BJ (cell line): ENCODE measurements at regions of chr4 and their contacts with region 1.

Region 1: DNA sequence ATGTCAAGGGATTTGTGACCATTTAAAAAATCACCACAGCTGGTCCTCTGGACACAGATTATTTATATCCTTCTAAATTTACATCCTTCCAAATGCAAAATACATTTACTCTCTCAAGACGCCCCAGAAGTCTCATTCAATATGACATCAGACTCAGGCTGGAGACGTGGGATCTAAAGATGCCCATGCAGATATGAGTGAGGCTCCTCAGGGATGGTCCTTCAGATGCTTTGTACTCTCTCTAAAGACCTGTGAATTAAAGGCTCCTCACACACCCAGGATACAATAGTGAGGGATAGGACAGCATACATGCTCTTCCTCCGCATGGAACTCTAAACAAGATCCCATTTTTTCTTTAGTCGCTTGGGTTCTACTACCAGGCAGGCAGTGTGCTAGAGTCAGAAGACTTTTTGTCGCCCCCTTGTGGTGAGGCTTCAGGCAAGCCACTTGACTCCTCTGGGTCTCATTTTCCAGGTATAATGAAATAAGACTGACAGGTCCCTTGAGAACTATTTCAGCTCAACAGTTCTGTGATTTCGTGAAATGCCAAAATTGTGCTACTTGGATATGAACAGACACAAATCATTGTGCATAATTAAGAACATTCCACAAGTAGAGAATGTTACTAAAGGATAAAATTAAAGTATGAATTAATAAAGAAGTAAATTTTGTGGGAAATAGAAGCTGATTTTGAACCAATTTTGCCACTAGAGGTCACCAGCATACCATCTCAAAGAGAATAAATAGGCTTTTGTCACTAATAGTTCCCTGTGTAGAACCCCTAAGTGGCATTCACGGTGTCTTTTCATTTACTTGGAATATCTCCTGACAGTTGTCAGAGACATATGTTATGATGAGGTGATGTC is 13.7 kb upstream of the SCOC start:
- DNase-seq: no peak
- H3K4me3 ChIP-seq: no peak overlapping the region
- H3K27me3 ChIP-seq: 0 out of 2 replicates have a peak, but pooled peaks cover 1% of the 10 kb centered on the region
- CTCF ChIP-seq: peak; percentile 83

Region 2: GRCh38 chr4:139522457-139522856 is 837.3 kb before region 1 on chr4:
- CTCF ChIA-PET with region 1: no interaction called
- POLR2A ChIA-PET with region 1: interaction called, 10 read pairs
- DNase-seq: no peak
- H3K4me3 ChIP-seq: no peak overlapping the region
- H3K27me3 ChIP-seq: no peaks in the 10 kb centered on the region
- CTCF ChIP-seq: no peak

Region 3: DNA sequence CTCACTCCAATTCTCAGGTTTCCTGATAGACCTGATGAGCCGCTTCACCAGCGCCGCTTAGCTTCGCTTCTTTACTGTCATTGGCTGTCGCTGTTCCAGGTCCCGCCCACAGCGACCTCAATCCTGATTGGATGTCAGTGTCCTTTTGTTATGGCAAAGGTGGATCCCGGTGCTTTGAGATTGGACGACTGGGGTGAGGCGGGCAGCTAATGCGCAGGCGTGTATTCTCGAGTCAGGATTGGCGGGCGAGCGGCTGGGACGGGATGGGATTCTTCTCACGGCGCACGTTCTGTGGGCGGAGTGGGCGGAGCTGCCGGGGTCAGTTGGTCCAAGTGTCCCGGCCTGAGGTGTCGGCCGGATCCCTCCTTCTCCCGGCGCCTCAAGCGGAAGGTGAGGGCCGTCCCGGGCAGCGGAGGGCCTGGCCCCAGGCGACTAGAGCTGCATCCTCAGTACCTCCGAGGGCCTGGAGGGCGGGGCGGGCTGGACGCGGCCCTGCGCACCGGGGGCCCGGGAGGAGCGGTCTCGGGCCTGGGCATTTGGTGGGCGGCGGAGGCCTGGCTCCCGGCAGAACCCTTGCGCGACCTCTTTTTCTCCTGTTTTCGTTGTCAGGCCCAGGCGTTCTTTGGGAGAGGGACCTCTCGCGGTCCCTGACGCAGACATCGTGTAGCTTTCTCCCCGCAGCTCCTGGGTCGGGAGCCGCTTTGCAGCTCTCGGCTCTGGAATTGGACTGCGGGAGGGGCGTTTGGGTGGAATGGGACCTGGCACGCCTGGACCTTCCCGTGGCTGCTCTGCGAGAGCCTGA is 13.7 kb after region 1 on chr4 and contains the start of gene SCOC:
- CTCF ChIA-PET with region 1: interaction called, 43 read pairs
- POLR2A ChIA-PET with region 1: interaction called, 4 read pairs
- DNase-seq: peak; percentile 97
- H3K4me3 ChIP-seq: peak within 1 kb of the TSS; percentile 96
- H3K27me3 ChIP-seq: no peaks in the 10 kb centered on the region
- CTCF ChIP-seq: no peak
- polyA plus RNA-seq, gene SCOC: 16.7 and 39.4 TPM in 2 replicates

Region 4: DNA sequence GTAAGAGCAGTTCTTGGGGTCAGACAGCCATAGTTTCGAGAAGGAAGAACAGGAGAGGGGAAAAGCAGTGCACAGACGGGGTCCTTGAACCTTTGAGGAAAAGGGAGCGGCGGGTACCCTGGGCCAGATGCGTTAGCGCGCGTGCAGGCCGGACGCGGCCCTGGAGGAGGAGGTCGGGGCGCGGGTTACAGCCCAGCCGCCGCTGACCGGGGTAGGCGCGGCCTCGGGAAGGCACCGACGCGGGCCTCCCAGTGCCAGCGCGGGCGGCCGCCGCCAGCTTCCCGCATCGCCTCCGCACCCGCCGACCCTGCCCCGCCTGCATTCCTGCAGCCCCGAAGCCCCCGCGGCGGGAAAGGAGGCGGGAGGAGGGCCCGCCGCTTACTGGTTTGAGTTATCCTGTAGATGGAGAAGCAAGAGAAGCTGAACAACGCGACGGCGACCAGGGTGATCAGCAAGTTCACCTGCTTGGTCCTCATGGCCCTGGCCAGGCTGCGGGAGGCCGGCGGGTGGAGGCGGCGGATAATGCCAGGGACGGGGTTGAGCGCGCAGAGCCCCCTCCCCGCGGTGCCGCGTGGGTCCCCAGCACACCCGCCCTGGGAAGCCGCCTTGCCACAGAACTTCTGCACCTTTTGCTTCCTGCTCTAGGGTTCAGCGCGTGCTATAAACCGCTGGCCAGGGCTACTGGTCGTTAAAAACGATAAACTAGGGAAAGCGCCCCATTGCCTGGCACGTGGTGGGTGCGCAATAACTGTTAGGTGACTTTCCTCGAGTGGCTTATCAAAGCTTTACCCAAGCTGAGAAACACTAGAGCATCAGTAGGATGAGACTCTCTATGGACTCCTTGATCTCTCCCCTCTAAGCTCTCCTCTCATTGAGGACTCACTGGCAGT is 138.2 kb after region 1 on chr4 and contains the start of gene MGAT4D:
- CTCF ChIA-PET with region 1: no interaction called
- POLR2A ChIA-PET with region 1: no interaction called
- DNase-seq: no peak
- H3K4me3 ChIP-seq: no peak within 1 kb of the TSS
- H3K27me3 ChIP-seq: peaks cover 20% of the 10 kb centered on the region
- CTCF ChIP-seq: no peak
- polyA plus RNA-seq, gene MGAT4D: not detected in 2 replicates

Region 5: GRCh38 chr4:140523857-140524742 is 164.3 kb after region 1 on chr4 and contains the start of gene ELMOD2:
- CTCF ChIA-PET with region 1: interaction called, 10 read pairs
- POLR2A ChIA-PET with region 1: no interaction called
- DNase-seq: peak; percentile 79
- H3K4me3 ChIP-seq: peak within 1 kb of the TSS; percentile 66
- H3K27me3 ChIP-seq: no peaks in the 10 kb centered on the region
- CTCF ChIP-seq: peak; percentile 98
- polyA plus RNA-seq, gene ELMOD2: 6.5 and 15.7 TPM in 2 replicates

Region 6: GRCh38 chr4:140609548-140610425 is 250.0 kb after region 1 on chr4:
- CTCF ChIA-PET with region 1: interaction called, 10 read pairs
- POLR2A ChIA-PET with region 1: no interaction called
- DNase-seq: no peak
- H3K4me3 ChIP-seq: no peak overlapping the region
- H3K27me3 ChIP-seq: no peaks in the 10 kb centered on the region; the same call in 1 of the 2 replicates
- CTCF ChIP-seq: peak; percentile 56

Region 7: DNA sequence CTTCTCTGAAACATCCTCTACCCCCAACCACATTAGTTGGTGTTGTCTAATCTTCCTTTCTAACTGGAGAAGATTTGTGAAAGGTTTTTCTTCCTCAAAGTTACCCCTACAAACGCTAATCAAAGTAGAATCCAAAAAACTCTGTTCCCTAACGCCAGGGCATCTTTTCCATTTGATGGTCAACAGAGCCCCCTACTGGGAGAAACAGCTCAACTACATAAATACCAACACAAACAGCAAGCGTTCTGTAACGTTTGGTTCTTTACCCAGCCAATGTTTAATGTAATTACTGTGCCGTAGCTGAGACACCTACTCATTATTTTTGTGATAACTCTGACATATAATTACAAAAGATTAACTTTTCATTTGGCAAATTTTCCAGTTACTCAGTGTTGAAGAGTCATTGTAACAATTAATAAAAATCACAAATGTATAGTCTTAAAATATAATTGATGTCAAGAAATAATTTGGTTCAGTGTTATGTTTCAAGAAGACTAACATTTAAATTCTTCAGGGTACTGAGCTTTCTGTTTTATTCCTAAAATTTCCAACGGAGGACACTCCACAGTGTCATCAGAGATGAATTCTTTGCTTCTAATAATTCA is 491.3 kb after region 1 on chr4:
- CTCF ChIA-PET with region 1: interaction called, 19 read pairs
- POLR2A ChIA-PET with region 1: no interaction called
- DNase-seq: no peak
- H3K4me3 ChIP-seq: no peak overlapping the region
- H3K27me3 ChIP-seq: peaks cover 1% of the 10 kb centered on the region; the same call in 1 of the 2 replicates
- CTCF ChIP-seq: peak; percentile 72